ENCODE measurements at regions of chr2 and their contacts with region 1.

Region 1: DNA sequence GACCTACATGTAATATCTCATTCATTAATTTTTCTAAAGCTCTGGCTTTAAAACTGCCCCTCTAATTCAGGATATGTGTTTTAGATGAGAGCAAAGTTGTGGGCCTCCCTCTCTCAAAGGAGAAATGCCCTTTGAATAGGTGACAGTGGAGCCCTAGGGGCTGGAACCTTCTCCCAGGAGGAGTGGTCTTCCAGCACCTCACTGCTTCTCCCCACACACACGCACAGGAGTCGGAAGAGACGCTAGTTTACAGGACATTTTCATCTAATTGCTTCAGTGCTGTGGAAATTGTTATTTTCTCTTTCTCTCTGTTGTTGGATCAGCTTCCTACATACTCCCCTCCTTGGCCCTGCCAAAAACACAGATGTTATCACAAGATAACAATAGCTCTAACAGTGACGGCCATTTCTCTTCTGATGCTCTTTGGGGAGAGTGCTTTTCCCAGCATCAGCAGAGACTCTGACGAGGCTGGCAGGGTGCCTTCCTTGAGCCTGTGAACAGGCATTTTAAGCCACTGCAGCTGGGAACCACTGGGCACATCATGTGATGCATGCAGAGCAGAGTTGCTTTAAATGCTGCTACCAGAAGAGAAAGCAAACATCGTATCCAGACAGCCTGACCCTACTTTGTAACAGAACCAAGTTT is 209.4 kb upstream of the SP5 start:
- DNase-seq: peak; percentile 89

Region 2: DNA sequence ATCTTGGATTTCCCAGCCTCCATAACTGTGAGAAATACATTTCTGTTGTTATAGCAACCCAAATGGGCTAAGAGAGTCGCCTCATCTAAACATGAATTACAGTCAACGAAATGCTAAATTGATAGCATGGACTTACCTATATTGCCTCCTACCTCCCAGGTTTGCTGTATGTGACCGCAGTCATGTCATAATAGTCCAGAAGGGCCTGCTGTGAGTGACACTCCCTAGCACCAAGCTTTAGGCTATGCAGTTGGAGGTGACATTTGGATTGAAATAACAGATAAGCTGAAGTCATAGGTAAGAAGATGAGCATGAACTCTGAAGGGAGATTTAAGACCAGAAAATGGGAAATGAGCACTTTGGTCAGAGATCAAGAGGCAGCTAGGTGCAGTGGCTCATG is 798.0 kb after region 1 on chr2:
- intact Hi-C with region 1: loop called in 1 of 2 experiments (anchors 5 kb)
- DNase-seq: no peak